CD4-positive, alpha-beta T cell (primary cell): ENCODE measurements at regions of chr15 and their contacts with region 1.

Region 1: GRCh38 chr15:41116116-41116871 is at the start of gene INO80:
- DNase-seq: peak; percentile 90 to 98 (median 95)
- ATAC-seq: peak; percentile 79
- H3K4me3 ChIP-seq: peak within 1 kb of the TSS; percentile 99
- H3K4me3 Mint-ChIP-seq: peak within 1 kb of the TSS; percentile 93
- H3K27ac ChIP-seq: peak within 1 kb of the TSS; percentile 79 to 91
- H3K27ac Mint-ChIP-seq: peak within 1 kb of the TSS; percentile 98
- H3K4me1 ChIP-seq: peaks cover 20% of the 10 kb centered on the region
- H3K4me1 Mint-ChIP-seq: peaks cover 25% of the 10 kb centered on the region
- H3K27me3 ChIP-seq: no peaks in the 10 kb centered on the region
- H3K27me3 Mint-ChIP-seq: no peaks in the 10 kb centered on the region
- CTCF ChIP-seq: no peak
- total RNA-seq, gene INO80: 20.3 to 22.9 TPM

Region 2: GRCh38 chr15:40763801-40764732 is 352.2 kb before region 1 on chr15 and contains the start of gene GCHFR:
- CTCF ChIA-PET with region 1: no interaction called
- POLR2A ChIA-PET with region 1: no interaction called
- intact Hi-C with region 1: loop called in 1 of 2 experiments (anchors 10 kb)
- DNase-seq: peak; percentile 35 to 87 (median 63)
- ATAC-seq: peak; percentile 48
- H3K4me3 ChIP-seq: peak within 1 kb of the TSS; percentile 98
- H3K4me3 Mint-ChIP-seq: peak within 1 kb of the TSS; percentile 89
- H3K27ac ChIP-seq: peak within 1 kb of the TSS; percentile 60 to 71
- H3K27ac Mint-ChIP-seq: peak within 1 kb of the TSS; percentile 90
- H3K4me1 ChIP-seq: peaks cover 40% of the 10 kb centered on the region
- H3K4me1 Mint-ChIP-seq: peaks cover 30% of the 10 kb centered on the region
- H3K27me3 ChIP-seq: no peaks in the 10 kb centered on the region
- H3K27me3 Mint-ChIP-seq: no peaks in the 10 kb centered on the region
- CTCF ChIP-seq: peak; percentile 45
- total RNA-seq, gene GCHFR: 13.5 to 14.8 TPM

Region 3: DNA sequence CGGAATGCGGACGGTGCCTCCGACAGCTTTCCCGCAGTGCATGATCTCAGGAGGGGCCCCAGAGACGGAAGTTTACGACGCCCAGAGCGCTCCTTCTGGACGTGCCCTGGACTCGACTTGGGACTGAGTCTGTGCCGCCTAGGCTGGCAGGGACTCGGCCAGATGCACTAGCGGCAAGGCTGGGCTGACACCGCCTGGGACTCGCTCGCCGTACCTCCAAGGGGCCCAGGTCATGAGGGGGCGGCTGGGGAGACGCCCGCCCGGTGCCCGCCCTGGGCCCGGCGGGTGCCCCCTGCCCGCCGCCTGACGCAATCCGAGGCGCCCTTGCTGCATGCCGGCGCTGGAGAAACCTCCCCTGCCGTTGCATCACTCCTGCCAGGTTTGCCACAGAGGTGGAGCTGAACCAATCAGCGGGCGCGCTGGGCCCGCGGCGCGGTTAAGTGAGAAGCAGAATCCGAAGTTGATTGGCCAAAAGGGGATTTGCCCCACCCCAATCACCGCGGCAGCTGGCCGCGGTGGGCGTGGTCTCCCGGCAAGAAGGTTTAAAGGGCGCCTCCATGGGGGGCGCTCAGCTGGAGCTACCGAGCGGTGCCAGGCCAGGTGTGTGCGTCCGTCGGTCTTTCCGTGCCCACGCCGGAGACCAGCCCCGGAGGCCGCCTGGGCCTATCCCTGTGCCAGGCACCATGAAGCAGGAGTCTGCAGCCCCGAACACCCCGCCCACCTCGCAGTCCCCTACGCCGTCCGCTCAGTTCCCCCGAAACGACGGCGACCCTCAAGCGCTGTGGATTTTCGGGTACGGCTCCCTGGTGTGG is 163.2 kb before region 1 on chr15 and contains the start of gene CHAC1:
- CTCF ChIA-PET with region 1: no interaction called
- POLR2A ChIA-PET with region 1: interaction called, 5 read pairs
- intact Hi-C with region 1: loop called in 1 of 2 experiments (anchors 5 kb)
- DNase-seq: peak; percentile 87 to 98 (median 93)
- ATAC-seq: peak; percentile 96
- H3K4me3 ChIP-seq: peak within 1 kb of the TSS; percentile 81
- H3K4me3 Mint-ChIP-seq: peak within 1 kb of the TSS; percentile 96
- H3K27ac ChIP-seq: no peak within 1 kb of the TSS
- H3K27ac Mint-ChIP-seq: peak within 1 kb of the TSS; percentile 82
- H3K4me1 ChIP-seq: peaks cover 18% of the 10 kb centered on the region
- H3K4me1 Mint-ChIP-seq: peaks cover 10% of the 10 kb centered on the region
- H3K27me3 ChIP-seq: peaks cover 0 to 4% of the 10 kb centered on the region in 2 experiments
- H3K27me3 Mint-ChIP-seq: no peaks in the 10 kb centered on the region
- CTCF ChIP-seq: peak; percentile 20
- total RNA-seq, gene CHAC1: 0.42 to 0.47 TPM

Region 4: DNA sequence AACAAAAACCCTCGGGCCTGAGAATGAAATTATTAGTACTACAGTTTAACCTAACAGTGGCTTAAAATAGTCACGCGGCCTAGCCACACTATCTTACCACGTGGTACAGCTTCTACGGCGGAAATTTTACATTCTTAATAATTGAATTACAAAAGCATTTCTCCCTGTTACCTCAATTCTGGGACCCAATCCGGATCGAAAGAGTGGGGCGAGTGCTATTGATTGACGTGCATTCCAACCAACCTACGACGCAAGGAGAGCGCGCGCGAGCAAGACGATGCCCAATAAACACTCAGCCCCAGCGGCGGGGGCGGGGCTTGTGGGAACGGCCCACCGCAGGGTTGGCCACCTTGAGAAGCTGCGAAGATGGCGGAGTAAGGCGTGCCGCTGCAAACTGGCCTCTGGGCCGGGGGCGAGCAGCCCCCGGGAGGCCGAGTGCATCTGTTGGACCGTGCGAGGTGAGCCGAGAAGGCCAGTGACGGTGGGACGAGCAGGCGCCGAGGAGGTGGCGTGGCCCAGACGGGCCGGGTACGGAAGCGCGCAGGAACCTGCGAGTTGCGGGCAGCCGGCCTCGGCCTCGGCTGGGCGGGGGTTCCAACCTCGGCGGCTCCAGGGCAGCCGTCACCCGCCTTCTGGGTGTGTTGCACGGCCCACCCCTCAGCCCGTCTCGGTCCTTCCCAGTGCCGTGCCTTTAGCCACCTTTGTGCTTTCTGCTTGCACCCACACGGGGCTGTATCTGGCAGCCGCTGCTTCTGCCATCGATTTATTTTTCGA is 167.5 kb after region 1 on chr15:
- CTCF ChIA-PET with region 1: no interaction called
- POLR2A ChIA-PET with region 1: interaction called, 3 read pairs
- intact Hi-C with region 1: loop called in 1 of 2 experiments (anchors 2 kb)
- DNase-seq: peak; percentile 94 to 99 (median 97)
- ATAC-seq: peak; percentile 96
- H3K4me3 ChIP-seq: peak overlapping the region; percentile 80
- H3K4me3 Mint-ChIP-seq: peak overlapping the region; percentile 91
- H3K27ac ChIP-seq: peak overlapping the region; percentile 83 to 86
- H3K27ac Mint-ChIP-seq: peak overlapping the region; percentile 91
- H3K4me1 ChIP-seq: peaks cover 29% of the 10 kb centered on the region
- H3K4me1 Mint-ChIP-seq: peaks cover 50% of the 10 kb centered on the region
- H3K27me3 ChIP-seq: no peaks in the 10 kb centered on the region
- H3K27me3 Mint-ChIP-seq: no peaks in the 10 kb centered on the region
- CTCF ChIP-seq: no peak